ENCODE measurements at regions of chr6 and their contacts with region 1.

Region 1: DNA sequence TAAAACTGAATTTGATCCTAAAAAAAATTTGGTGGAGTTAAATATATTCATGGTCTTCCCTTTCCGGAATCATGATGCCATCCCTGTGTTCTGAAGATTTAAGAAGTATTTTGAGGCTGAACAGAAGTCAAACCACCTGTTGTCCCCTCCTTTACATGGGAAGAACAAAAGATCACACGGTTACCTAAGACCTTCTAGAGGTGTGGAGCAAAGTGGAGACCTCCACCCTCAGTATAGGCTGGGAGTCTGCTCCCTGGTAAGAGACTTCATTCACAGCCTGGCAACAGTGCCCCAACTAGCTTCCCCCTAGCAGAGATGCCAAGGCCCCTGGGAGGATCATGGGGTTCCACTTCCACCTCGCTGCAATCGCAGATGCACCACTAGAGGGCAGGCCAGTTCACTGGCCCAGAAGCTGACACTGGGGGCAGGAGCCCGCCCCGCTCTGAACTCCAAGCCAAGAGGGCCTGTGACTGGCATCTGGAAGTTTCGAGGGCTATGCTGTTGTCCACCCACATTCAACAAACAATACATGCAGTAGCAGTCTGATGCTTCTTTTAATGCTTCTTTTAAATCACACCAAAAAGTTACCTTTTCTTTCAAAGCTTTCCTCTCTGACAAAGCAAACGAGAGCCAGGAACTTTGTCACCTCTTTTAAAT is 19.5 kb upstream of the UBE2J1 start:
- DNase-seq: peak; percentile 67 to 88 (median 81)
- ATAC-seq: peak; percentile 59
- H3K4me3 ChIP-seq: no peak overlapping the region
- H3K4me3 Mint-ChIP-seq: no peak overlapping the region
- H3K27ac ChIP-seq: no peak overlapping the region
- H3K27ac Mint-ChIP-seq: peak overlapping the region; percentile 72
- H3K4me1 ChIP-seq: peaks cover 21% of the 10 kb centered on the region
- H3K4me1 Mint-ChIP-seq: peaks cover 28% of the 10 kb centered on the region
- H3K27me3 ChIP-seq: peaks cover 0 to 2% of the 10 kb centered on the region in 2 experiments
- H3K27me3 Mint-ChIP-seq: no peaks in the 10 kb centered on the region
- CTCF ChIP-seq: peak; percentile 91

Region 2: GRCh38 chr6:88709819-88710246 is 662.1 kb before region 1 on chr6:
- CTCF ChIA-PET with region 1: no interaction called
- POLR2A ChIA-PET with region 1: no interaction called
- intact Hi-C with region 1: no loop called
- DNase-seq: no peak
- ATAC-seq: no peak
- H3K4me3 ChIP-seq: no peak overlapping the region
- H3K4me3 Mint-ChIP-seq: no peak overlapping the region
- H3K27ac ChIP-seq: no peak overlapping the region
- H3K27ac Mint-ChIP-seq: no peak overlapping the region
- H3K4me1 ChIP-seq: no peaks in the 10 kb centered on the region
- H3K4me1 Mint-ChIP-seq: peaks cover 5% of the 10 kb centered on the region
- H3K27me3 ChIP-seq: no peaks in the 10 kb centered on the region
- H3K27me3 Mint-ChIP-seq: no peaks in the 10 kb centered on the region
- CTCF ChIP-seq: no peak

Region 3: GRCh38 chr6:89122625-89123024 is 249.4 kb before region 1 on chr6:
- CTCF ChIA-PET with region 1: no interaction called
- POLR2A ChIA-PET with region 1: no interaction called
- intact Hi-C with region 1: loop called (anchors 2 to 5 kb)
- DNase-seq: peak in 2 of 9 experiments; percentile 34 to 49
- ATAC-seq: peak; percentile 57
- H3K4me3 ChIP-seq: no peak overlapping the region
- H3K4me3 Mint-ChIP-seq: no peak overlapping the region
- H3K27ac ChIP-seq: no peak overlapping the region
- H3K27ac Mint-ChIP-seq: no peak overlapping the region
- H3K4me1 ChIP-seq: no peaks in the 10 kb centered on the region
- H3K4me1 Mint-ChIP-seq: peaks cover 2% of the 10 kb centered on the region
- H3K27me3 ChIP-seq: no peaks in the 10 kb centered on the region
- H3K27me3 Mint-ChIP-seq: no peaks in the 10 kb centered on the region
- CTCF ChIP-seq: peak; percentile 47

Region 4: DNA sequence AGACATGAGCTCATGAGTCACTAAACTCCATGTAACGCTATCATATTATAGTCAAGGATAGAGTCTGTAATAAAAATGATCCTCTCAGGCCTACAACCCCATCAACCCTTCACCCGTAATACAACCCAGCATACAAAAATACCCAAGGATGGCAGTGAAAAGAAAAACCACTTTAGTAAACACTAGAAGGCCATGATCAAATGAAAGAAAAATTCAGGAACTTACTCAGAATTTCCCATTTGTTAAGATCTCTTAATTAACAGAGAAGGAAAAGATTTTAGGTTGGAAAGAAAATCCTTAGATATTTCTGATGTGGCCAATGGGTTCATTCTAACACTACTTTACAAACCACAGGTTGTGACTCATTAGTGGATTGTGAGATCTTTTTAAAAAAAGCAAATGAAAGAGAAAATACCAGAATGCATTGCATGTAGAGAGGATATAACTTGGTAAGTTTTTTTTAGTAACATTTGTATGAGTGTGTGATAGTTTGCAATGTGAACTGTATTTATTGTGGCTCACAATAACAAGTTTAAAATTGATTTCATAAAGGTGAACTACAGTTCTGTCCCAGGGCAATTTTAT is 11.5 kb before region 1 on chr6:
- CTCF ChIA-PET with region 1: interaction called, 68 read pairs
- POLR2A ChIA-PET with region 1: interaction called, 7 read pairs
- intact Hi-C with region 1: loop called in 1 of 2 experiments (anchors 1 kb)
- DNase-seq: peak in 1 of 9 experiments; percentile 57
- ATAC-seq: peak; percentile 74
- H3K4me3 ChIP-seq: no peak overlapping the region
- H3K4me3 Mint-ChIP-seq: no peak overlapping the region
- H3K27ac ChIP-seq: no peak overlapping the region
- H3K27ac Mint-ChIP-seq: peak overlapping the region; percentile 62
- H3K4me1 ChIP-seq: peaks cover 28% of the 10 kb centered on the region
- H3K4me1 Mint-ChIP-seq: peaks cover 54% of the 10 kb centered on the region
- H3K27me3 ChIP-seq: no peaks in the 10 kb centered on the region
- H3K27me3 Mint-ChIP-seq: no peaks in the 10 kb centered on the region
- CTCF ChIP-seq: no peak

Region 5: DNA sequence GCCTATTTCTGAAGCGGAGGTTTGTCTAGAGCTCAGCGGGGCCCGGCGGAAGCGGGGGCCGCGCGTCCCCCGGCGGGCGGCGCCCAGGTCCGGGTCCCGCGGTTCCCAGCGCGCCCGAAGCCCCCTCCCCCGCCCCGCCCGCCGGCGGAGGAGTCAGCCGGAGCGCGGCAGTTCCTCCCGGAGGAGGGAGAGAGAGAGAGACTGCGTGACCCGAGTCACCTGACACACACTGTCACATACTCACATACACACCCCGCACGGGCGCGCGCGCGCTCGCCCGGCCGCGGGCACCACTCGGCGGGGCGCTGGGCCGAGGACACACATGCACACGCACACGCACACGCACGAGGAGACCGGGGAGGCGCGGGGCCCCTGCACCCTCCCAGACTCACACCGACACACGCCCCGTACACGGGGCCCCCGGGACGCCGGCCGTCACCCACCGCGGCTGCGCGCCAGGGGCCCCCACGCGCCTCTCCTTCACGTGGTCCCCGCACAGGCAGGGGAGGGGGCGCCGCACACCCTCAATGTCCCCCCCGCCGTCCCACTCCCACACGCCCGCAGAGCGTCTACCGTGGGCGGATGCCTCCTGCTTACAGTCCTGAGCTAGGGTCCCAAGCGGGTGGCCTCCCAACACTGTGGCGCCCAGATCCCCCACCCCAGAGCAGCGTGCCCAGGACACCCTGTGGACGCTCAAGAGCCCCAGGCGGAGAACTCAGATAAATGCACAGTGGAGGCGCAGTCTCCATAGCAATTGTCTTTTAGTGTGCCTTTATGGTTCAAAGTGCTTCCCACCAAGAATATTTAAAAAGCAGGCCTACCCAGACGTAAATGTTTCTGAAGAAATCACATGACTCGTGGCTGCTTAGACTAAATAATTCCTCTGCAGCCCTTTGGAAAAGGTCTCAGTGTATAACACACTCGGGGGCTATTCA is 40.4 kb after region 1 on chr6 and contains the start of gene RRAGD:
- CTCF ChIA-PET with region 1: interaction called, 9 read pairs
- POLR2A ChIA-PET with region 1: no interaction called
- intact Hi-C with region 1: loop called (anchors 1 to 5 kb)
- DNase-seq: peak; percentile 11 to 77 (median 52)
- ATAC-seq: peak; percentile 73
- H3K4me3 ChIP-seq: peak within 1 kb of the TSS; percentile 62 to 72
- H3K4me3 Mint-ChIP-seq: peak within 1 kb of the TSS; percentile 94
- H3K27ac ChIP-seq: peak within 1 kb of the TSS in 1 of 2 experiments; percentile 29
- H3K27ac Mint-ChIP-seq: peak within 1 kb of the TSS; percentile 77
- H3K4me1 ChIP-seq: peaks cover 14% of the 10 kb centered on the region
- H3K4me1 Mint-ChIP-seq: peaks cover 20% of the 10 kb centered on the region
- H3K27me3 ChIP-seq: peaks cover 0 to 5% of the 10 kb centered on the region in 2 experiments
- H3K27me3 Mint-ChIP-seq: peaks cover 13% of the 10 kb centered on the region
- CTCF ChIP-seq: no peak
- total RNA-seq, gene RRAGD: 5.6 to 9.3 TPM

Region 6: GRCh38 chr6:89610149-89610642 is 238.2 kb after region 1 on chr6:
- CTCF ChIA-PET with region 1: interaction called, 16 read pairs
- POLR2A ChIA-PET with region 1: no interaction called
- intact Hi-C with region 1: loop called (anchors 1 kb)
- DNase-seq: peak; percentile 59 to 86 (median 76)
- ATAC-seq: peak; percentile 88
- H3K4me3 ChIP-seq: no peak overlapping the region
- H3K4me3 Mint-ChIP-seq: no peak overlapping the region
- H3K27ac ChIP-seq: no peak overlapping the region
- H3K27ac Mint-ChIP-seq: no peak overlapping the region
- H3K4me1 ChIP-seq: no peaks in the 10 kb centered on the region
- H3K4me1 Mint-ChIP-seq: peaks cover 3% of the 10 kb centered on the region
- H3K27me3 ChIP-seq: no peaks in the 10 kb centered on the region
- H3K27me3 Mint-ChIP-seq: no peaks in the 10 kb centered on the region
- CTCF ChIP-seq: peak; percentile 95